Activated T-helper 2 cell treated with anti-CD3 and anti-CD28 coated beads, Interferon-gamma antibody, Interleukin-2, Interleukin-4, amounts not matched to agents 10 μg/mL and 5 μg/mL and 100 μg/mL, durations not matched to agents 14 hours and 24 hours and 36 hours (primary cell): ENCODE measurements at regions of chr2 and their contacts with region 1.

Region 1: GRCh38 chr2:206693399-206694137 is 24.6 kb downstream of the DYTN start:
- DNase-seq: no peak
- H3K4me3 Mint-ChIP-seq: no peak overlapping the region
- H3K27ac Mint-ChIP-seq: no peak overlapping the region
- H3K4me1 Mint-ChIP-seq: no peaks in the 10 kb centered on the region
- H3K27me3 Mint-ChIP-seq: peaks cover 16% of the 10 kb centered on the region

Region 2: GRCh38 chr2:206477296-206477695 is 216.3 kb before region 1 on chr2:
- intact Hi-C with region 1: no loop called
- DNase-seq: no peak
- H3K4me3 Mint-ChIP-seq: no peak overlapping the region
- H3K27ac Mint-ChIP-seq: no peak overlapping the region
- H3K4me1 Mint-ChIP-seq: no peaks in the 10 kb centered on the region
- H3K27me3 Mint-ChIP-seq: peaks cover 5% of the 10 kb centered on the region

Region 3: DNA sequence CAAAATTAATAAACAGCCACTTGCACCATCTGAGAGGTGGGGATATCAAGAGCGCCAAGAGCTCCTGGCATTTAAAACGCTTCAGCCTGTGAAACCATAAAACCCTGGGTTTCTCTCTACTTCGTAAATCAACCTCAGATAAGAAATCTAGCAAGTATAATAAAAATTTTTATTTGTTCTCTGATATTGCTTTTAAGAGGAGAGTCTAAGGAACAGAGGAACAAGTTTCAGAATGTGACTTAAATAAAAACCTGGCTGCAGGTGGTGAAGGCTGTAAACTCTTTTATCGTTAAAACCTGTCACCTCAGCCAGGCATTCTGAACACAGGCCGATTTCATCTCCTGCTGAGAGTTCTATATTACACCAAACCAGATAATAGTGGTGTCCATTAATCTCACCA is 14.7 kb after region 1 on chr2:
- intact Hi-C with region 1: no loop called
- DNase-seq: no peak
- H3K4me3 Mint-ChIP-seq: no peak overlapping the region
- H3K27ac Mint-ChIP-seq: no peak overlapping the region
- H3K4me1 Mint-ChIP-seq: no peaks in the 10 kb centered on the region
- H3K27me3 Mint-ChIP-seq: peaks cover 8% of the 10 kb centered on the region

Region 4: GRCh38 chr2:206780671-206781070 is 87.1 kb after region 1 on chr2:
- intact Hi-C with region 1: loop called (anchors 2 kb)
- DNase-seq: no peak
- H3K4me3 Mint-ChIP-seq: no peak overlapping the region
- H3K27ac Mint-ChIP-seq: no peak overlapping the region
- H3K4me1 Mint-ChIP-seq: peaks cover 17% of the 10 kb centered on the region
- H3K27me3 Mint-ChIP-seq: no peaks in the 10 kb centered on the region

Region 5: GRCh38 chr2:206981739-206982340 is 288.3 kb after region 1 on chr2:
- intact Hi-C with region 1: loop called (anchors 5 kb)
- DNase-seq: peak; percentile 28
- H3K4me3 Mint-ChIP-seq: no peak overlapping the region
- H3K27ac Mint-ChIP-seq: no peak overlapping the region
- H3K4me1 Mint-ChIP-seq: peaks cover 20% of the 10 kb centered on the region
- H3K27me3 Mint-ChIP-seq: peaks cover 11% of the 10 kb centered on the region